A673 (cell line): ENCODE measurements at regions of chr18 and their contacts with region 1.

Region 1: GRCh38 chr18:28735731-28736130 is 558.8 kb upstream of the CDH2 start:
- DNase-seq: peak; percentile 97
- H3K4me3 ChIP-seq: peak overlapping the region; percentile 1
- H3K27ac ChIP-seq: peak overlapping the region; percentile 79
- H3K4me1 ChIP-seq: peaks cover 18% of the 10 kb centered on the region
- H3K27me3 ChIP-seq: no peaks in the 10 kb centered on the region
- CTCF ChIP-seq: no peak

Region 2: DNA sequence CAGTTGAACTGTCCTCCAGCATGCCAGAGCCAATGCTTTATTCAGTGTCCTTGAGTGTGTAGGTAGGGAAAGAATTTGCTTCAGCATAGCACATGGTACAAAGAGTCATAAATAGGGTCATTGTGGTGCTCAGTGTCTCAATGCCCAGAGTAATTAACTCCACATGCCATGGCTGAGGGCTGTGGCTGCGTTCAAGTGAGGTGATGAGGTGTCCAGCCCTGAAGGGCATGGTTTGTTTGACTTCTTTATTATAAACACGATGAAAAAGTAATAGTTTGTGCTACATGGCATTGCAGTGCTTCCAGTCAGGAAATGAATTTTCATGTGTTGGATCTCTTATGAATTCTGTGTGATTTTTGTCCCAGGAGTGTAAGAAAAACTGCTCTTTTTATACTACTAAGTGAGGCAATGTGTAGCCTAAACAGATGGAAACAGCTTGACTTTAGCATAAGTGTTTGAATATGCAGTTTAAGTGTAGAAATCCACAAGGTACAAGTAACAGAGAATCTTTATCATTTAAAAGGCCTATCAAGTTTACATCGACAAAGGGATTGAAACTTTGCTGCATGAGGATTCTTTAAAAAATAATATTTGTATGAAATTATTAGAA is 50.9 kb before region 1 on chr18:
- CTCF ChIA-PET with region 1: no interaction called
- POLR2A ChIA-PET with region 1: interaction called, 10 read pairs
- intact Hi-C with region 1: no loop called
- DNase-seq: no peak
- H3K4me3 ChIP-seq: no peak overlapping the region
- H3K27ac ChIP-seq: no peak overlapping the region
- H3K4me1 ChIP-seq: no peaks in the 10 kb centered on the region
- H3K27me3 ChIP-seq: no peaks in the 10 kb centered on the region
- CTCF ChIP-seq: no peak

Region 3: DNA sequence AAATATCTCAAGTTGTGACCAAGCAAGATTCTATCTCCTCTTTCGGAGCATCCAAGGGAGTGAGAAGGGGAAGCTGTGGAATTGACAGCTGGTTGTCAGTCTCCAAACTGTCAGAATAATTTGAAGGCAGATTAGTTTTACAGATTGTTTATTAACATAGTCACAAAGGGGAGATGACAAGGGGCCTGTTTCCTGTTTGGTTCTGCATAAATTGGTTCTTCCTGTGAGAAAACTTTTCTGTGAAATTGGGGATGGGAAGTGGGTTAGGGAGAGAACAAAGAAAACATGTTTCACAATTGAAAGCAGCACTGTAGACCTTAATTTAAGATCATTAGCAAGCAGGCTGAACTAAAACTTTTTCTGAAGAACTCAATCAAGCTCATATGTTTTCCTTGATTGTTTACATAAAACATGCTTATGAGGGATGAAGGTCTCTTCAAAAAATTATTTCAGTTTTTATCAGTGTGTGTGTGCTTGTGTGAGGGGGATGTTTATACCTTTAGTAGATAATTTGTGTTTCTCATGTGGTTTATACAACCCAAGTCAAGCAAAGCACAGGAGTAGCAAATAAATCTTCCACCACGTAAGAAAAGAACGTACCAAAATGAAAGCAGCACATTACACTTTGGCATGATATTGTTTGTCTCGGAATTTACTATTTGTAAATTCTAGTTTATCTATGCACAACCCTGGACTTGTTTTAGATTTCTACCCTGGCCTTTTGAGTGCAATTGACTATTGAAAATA is 46.1 kb after region 1 on chr18:
- CTCF ChIA-PET with region 1: no interaction called
- POLR2A ChIA-PET with region 1: no interaction called
- intact Hi-C with region 1: loop called (anchors 1 kb)
- DNase-seq: peak; percentile 96
- H3K4me3 ChIP-seq: no peak overlapping the region
- H3K27ac ChIP-seq: peak overlapping the region; percentile 52
- H3K4me1 ChIP-seq: peaks cover 40% of the 10 kb centered on the region
- H3K27me3 ChIP-seq: no peaks in the 10 kb centered on the region
- CTCF ChIP-seq: no peak

Region 4: GRCh38 chr18:28802546-28802945 is 66.8 kb after region 1 on chr18:
- CTCF ChIA-PET with region 1: no interaction called
- POLR2A ChIA-PET with region 1: no interaction called
- intact Hi-C with region 1: loop called (anchors 1 kb)
- DNase-seq: peak; percentile 94
- H3K4me3 ChIP-seq: no peak overlapping the region
- H3K27ac ChIP-seq: peak overlapping the region; percentile 72
- H3K4me1 ChIP-seq: peaks cover 33% of the 10 kb centered on the region
- H3K27me3 ChIP-seq: no peaks in the 10 kb centered on the region
- CTCF ChIP-seq: no peak

Region 5: GRCh38 chr18:28974504-28974903 is 238.8 kb after region 1 on chr18:
- CTCF ChIA-PET with region 1: no interaction called
- POLR2A ChIA-PET with region 1: no interaction called
- intact Hi-C with region 1: no loop called
- DNase-seq: no peak
- H3K4me3 ChIP-seq: no peak overlapping the region
- H3K27ac ChIP-seq: no peak overlapping the region
- H3K4me1 ChIP-seq: no peaks in the 10 kb centered on the region
- H3K27me3 ChIP-seq: peaks cover 3% of the 10 kb centered on the region
- CTCF ChIP-seq: no peak

Region 6: DNA sequence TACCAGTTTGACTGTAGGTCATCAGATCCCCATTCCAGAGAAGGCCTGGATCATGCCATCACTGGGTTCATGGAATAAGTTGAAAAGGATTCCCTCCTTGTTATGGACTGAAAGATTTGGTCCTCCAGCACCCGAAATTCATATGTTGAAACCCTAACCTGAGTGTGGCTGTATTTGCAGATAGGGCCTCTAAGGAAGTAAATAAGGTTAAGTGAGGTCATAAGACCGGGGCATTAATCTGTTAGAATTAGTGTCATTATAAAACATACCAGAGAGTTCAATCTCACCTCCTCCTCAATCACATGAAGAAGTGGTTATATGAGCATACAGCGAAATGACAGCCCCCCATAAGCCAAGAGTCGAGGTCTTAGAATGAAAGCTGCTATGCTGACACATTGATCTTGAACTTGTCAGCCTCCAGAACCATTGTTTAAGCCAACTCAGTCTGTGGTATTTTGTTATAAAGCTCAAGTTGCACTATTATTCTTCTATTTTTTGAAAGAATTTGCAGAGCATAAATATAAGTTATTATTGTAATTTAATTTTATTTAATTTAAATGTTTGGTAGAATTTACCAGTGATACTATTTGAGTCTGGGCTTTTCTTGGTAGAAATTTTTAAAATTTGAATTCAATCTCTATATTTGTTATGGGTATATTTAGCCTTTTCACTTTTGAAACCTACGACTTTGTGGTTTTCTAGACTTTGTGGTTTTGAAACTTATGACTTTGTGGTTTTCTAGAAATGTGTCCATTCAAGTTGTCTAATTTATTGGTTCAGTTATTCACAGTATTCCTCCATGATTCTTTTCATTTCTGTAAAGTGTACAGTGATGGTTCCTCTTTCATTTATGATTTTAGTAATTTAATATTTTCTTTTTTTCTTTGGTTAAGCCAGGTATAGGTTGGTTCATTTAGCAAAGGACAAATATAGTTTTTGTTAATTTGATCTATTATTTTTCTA is 647.9 kb after region 1 on chr18:
- CTCF ChIA-PET with region 1: no interaction called
- POLR2A ChIA-PET with region 1: no interaction called
- intact Hi-C with region 1: no loop called
- DNase-seq: no peak
- H3K4me3 ChIP-seq: no peak overlapping the region
- H3K27ac ChIP-seq: no peak overlapping the region
- H3K4me1 ChIP-seq: no peaks in the 10 kb centered on the region
- H3K27me3 ChIP-seq: no peaks in the 10 kb centered on the region
- CTCF ChIP-seq: no peak